Cardiac septum (tissue), 1 donor: ENCODE measurements at regions of chr7 and their contacts with region 1.

Region 1: GRCh38 chr7:151244196-151244840 is 4.2 kb downstream of the SMARCD3 start:
- DNase-seq: no peak

Region 2: DNA sequence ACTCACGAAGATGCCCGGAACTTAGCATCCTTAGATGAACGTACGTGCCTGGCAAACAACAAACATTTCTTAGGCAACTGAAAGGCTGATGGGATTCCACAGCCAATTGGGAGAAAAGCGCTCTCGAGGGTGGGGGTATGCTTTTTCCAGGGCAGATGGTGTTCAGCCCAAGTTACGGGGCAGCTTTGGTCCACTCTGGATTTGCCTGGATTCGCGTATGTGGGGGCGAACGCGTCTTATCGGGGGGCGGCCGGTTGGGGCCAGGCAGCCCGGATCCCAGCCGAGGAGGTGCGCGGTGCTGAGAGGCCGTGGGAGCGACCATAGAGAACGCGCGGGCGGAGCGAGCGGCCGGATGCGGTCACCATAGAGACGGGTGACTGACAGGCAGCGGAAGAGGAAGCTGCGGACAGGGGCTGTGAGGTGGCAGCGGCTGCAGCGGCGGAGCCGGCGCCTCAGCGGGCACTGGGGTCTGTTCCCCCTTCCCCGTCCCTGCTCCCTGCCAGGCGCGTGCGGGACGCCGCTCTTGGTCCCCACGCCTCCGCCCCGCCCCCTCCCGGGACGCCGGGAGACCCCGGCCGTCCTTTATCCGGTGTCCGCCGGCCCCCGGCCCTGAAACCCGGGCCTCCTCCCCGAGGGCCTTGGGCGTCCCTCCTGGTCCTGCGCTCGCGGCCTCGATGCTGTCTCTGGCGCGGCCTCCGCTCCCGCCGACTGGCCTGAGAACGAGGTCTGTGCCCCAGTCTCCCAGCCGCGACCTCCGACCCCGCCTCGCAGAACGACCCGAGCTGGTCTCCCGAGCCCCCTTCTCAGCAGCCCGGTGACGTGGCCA is 12.0 kb before region 1 on chr7 and contains the start of gene CHPF2:
- intact Hi-C with region 1: loop called (anchors 2 kb)
- DNase-seq: peak; percentile 98
- total RNA-seq, gene CHPF2: 31.0 TPM

Region 3: DNA sequence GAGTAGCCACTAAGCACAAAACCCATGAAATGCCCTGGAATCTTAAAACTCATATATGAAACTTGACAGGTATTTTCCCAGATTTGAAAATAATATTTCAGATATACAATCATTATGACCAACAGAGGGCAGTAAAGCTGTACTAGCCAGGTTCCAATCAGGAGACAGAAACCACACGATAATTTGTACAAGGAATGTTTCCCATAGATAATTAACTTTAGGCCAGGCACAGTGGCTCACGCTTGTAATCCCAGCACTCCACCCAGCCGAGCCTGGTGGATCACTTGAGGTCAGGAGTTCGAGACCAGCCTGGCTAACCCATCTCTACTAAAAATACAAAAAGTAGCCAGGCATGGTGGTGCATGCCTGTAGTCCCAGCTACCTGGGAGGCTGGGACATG is 66.3 kb after region 1 on chr7:
- intact Hi-C with region 1: no loop called
- DNase-seq: no peak